Heart right ventricle (tissue), 16 donors: ENCODE measurements at regions of chr7 and their contacts with region 1.

Region 1: GRCh38 chr7:112206238-112207044 is at the starts of genes DOCK4 and ZNF277:
- DNase-seq: peak; percentile 99
- ATAC-seq: peak; percentile 96 to 99 (median 96)
- H3K4me3 ChIP-seq: peak within 1 kb of the TSS; percentile 71 to 98 (median 92)
- H3K27ac ChIP-seq: peak within 1 kb of the TSS; percentile 78 to 95 (median 92)
- H3K4me1 ChIP-seq: peaks cover 2 to 46% (median 34%) of the 10 kb centered on the region in 9 donors
- H3K27me3 ChIP-seq: peaks cover 0 to 12% (median 0%) of the 10 kb centered on the region in 7 donors
- CTCF ChIP-seq: peak in 1 of 9 donors; percentile 10
- total RNA-seq, gene DOCK4: 10.8 to 26.8 (median 16.4) TPM
- total RNA-seq, gene ZNF277: 14.1 to 25.7 (median 17.6) TPM

Region 2: DNA sequence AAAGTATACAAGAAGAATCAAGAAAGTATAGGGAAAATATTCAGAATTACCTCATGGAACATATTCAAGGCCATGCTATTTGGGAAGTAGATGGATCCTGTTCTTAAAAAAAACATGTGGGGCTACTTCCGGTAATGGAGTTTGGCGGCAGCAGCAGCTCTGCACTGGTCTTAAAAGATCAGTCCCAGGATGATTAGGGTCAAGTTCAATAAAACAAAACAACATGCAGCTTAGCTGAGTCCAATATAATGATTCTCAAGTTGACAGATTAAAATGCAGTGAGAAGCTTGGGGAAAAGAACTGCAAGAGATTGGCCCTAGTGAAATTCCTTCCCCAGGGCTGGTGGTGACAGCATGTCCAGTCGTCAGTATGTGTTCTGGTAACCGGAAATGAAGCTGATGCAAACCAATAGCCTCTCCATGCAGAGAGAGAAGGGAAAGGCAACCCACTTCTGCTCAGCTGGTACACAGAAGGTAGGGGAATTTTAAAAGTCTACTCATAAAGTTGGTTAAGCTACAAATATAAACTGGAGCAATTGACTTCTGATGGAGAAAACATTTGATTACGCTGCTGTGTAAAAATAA is 339.0 kb before region 1 on chr7:
- intact Hi-C with region 1: loop called in 1 of 10 experiments (anchors 10 kb)
- DNase-seq: no peak
- ATAC-seq: peak in 4 of 8 donors; percentile 25 to 46 (median 38)
- H3K4me3 ChIP-seq: no peak overlapping the region
- H3K27ac ChIP-seq: peak overlapping the region in 4 of 10 donors; percentile 5 to 62 (median 28)
- H3K4me1 ChIP-seq: peaks cover 0 to 24% (median 5%) of the 10 kb centered on the region in 9 donors
- H3K27me3 ChIP-seq: no peaks in the 10 kb centered on the region
- CTCF ChIP-seq: no peak

Region 3: DNA sequence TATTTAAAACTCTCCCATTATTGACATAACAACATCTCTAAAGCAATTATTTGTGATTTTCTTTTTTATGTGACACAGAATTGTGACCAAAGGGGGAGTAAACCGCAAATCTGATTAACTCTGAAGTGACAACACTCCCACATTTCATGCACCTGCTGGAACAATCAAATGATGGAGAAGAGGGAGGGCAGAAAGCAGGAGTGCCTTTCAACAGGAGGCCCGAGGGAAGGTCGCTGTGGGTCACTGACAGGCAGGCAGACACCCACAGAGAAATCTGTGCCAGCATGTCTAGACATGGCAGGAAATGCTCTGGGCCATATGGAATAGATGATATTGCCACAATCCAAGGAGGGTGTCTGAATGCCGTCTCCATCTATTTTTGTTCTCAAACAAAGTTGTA is 247.5 kb before region 1 on chr7:
- intact Hi-C with region 1: loop called in 5 of 10 experiments (anchors 5 to 10 kb)
- DNase-seq: no peak
- ATAC-seq: no peak
- H3K4me3 ChIP-seq: no peak overlapping the region
- H3K27ac ChIP-seq: no peak overlapping the region
- H3K4me1 ChIP-seq: peaks cover 2 to 50% (median 39%) of the 10 kb centered on the region in 9 donors
- H3K27me3 ChIP-seq: no peaks in the 10 kb centered on the region
- CTCF ChIP-seq: no peak

Region 4: DNA sequence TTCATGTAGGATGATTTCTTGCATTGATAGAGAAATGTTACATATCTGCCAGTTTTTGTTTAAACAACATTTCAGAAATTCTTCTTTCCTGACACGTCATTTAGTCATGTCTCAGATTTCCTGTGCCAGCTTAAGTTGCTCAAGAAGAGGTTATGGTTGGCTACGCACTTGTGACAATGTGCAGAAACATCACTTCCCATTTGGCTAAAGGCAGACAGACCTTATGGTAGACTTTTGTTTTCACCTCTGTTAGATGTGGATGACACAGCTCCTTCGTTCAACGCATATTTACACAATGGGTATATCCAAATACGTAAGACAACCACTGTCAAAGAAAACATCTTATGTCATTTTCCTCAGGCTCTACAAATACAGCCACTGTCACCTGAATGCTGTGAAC is 126.0 kb before region 1 on chr7:
- intact Hi-C with region 1: loop called in 4 of 10 experiments (anchors 5 to 10 kb)
- DNase-seq: no peak
- ATAC-seq: peak in 7 of 8 donors; percentile 37 to 78 (median 75)
- H3K4me3 ChIP-seq: peak overlapping the region in 2 of 10 donors; percentile 6 to 11
- H3K27ac ChIP-seq: peak overlapping the region in 6 of 10 donors; percentile 23 to 90 (median 57)
- H3K4me1 ChIP-seq: peaks cover 0 to 71% (median 37%) of the 10 kb centered on the region in 9 donors
- H3K27me3 ChIP-seq: no peaks in the 10 kb centered on the region
- CTCF ChIP-seq: no peak

Region 5: GRCh38 chr7:112129655-112130323 is 76.7 kb before region 1 on chr7:
- intact Hi-C with region 1: loop called in 1 of 10 experiments (anchors 10 kb)
- DNase-seq: peak in 1 of 2 donors; percentile 28
- ATAC-seq: peak in 7 of 8 donors; percentile 21 to 90 (median 48)
- H3K4me3 ChIP-seq: no peak overlapping the region
- H3K27ac ChIP-seq: peak overlapping the region in 7 of 10 donors; percentile 11 to 80 (median 59)
- H3K4me1 ChIP-seq: peaks cover 5 to 60% (median 51%) of the 10 kb centered on the region in 9 donors
- H3K27me3 ChIP-seq: no peaks in the 10 kb centered on the region
- CTCF ChIP-seq: no peak

Region 6: DNA sequence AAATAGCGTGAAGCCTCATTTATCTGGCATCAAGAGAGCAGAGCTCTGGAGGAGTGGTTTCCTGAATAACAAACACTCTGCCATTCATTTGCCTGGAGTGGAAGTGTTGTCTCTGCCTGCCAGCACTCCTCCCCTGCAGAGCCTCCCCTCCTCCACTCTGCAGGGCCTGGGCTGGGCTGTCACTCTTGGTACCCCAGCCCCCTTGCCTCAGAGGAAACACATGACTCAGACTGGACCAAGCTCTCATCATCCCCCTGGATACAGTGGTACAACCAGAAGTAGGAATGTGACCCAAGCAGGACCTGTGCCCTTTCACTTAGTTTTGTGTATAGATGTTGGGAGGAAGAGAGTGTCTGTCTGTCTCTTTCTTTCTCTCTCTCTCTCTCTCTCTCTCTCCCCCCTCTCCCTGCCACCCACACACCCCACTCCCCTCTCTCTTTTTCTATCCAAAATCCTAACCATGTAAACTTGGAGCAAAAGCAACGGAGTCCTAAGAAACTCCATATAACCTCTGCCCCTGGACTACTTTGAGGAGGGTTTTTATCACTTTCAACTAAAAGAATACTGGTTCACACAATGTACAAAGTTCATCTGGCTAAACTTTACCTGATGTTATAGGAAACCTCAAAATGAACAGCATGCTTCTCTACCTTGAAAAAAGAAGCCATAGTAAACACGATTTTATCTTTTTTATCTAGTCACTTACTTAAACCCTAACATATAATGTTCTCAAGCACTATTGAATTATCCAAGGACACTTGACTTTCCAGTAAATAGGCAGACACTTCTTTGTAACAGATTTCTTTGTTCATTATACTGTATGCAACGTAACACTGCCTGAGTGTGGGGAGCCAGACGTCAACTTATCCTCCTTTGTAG is 44.1 kb before region 1 on chr7:
- intact Hi-C with region 1: loop called in 2 of 10 experiments (anchors 5 kb)
- DNase-seq: peak; percentile 37 to 58
- ATAC-seq: peak; percentile 78 to 97 (median 92)
- H3K4me3 ChIP-seq: no peak overlapping the region
- H3K27ac ChIP-seq: peak overlapping the region in 5 of 10 donors; percentile 18 to 62 (median 56)
- H3K4me1 ChIP-seq: peaks cover 5 to 66% (median 36%) of the 10 kb centered on the region in 9 donors
- H3K27me3 ChIP-seq: no peaks in the 10 kb centered on the region
- CTCF ChIP-seq: no peak

Region 7: GRCh38 chr7:112266595-112267270 is 60.3 kb after region 1 on chr7:
- intact Hi-C with region 1: no loop called
- DNase-seq: no peak
- ATAC-seq: no peak
- H3K4me3 ChIP-seq: no peak overlapping the region
- H3K27ac ChIP-seq: no peak overlapping the region
- H3K4me1 ChIP-seq: peaks cover 0 to 33% (median 18%) of the 10 kb centered on the region in 9 donors
- H3K27me3 ChIP-seq: no peaks in the 10 kb centered on the region
- CTCF ChIP-seq: no peak

Region 8: DNA sequence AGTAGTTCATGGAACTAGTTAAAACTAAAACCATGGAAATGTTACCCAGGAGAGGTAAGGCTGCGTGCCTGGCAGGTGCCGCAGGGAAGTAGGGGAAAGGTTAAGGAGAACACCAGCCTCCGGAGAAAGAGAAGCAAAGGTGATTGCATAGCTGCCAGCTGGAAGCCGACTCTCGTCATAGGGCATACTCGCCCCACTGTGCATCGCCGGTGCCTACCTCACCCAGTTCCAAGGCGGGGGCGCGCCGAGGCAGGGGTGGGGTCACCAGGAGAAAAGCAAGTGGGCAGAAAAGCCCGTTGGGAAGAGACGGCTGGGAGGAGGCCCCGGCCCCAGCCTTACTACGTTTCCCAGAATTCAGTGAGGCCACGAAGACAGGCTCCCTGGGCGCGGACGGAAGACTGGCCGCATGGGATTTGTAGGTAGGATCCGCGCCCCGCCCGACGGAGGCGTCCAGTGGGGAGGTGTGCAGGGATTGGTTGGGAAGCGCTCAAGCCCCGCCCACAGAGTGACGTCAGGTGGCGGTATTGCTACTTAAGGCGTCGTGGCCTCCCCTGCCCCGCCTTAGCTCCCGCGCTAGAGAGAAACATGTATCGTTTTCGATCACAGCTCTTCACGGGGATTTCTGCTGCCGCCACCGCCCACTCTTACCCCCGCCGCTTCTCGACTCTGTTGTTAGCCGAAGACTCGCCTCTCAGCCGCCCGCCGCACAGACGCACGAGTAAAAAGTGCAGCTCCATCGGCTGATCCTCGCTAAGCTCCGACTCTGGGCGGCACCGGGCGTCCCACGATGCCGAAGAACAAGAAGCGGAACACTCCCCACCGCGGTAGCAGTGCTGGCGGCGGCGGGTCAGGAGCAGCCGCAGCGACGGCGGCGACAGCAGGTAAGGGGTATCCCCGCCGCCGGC is 243.7 kb after region 1 on chr7 and contains the start of gene IFRD1:
- intact Hi-C with region 1: loop called in 1 of 10 experiments (anchors 5 kb)
- DNase-seq: peak; percentile 99
- ATAC-seq: peak; percentile 90 to 96 (median 94)
- H3K4me3 ChIP-seq: peak within 1 kb of the TSS; percentile 77 to 97 (median 90)
- H3K27ac ChIP-seq: peak within 1 kb of the TSS; percentile 91 to 99 (median 96)
- H3K4me1 ChIP-seq: peaks cover 0 to 49% (median 39%) of the 10 kb centered on the region in 9 donors
- H3K27me3 ChIP-seq: no peaks in the 10 kb centered on the region
- CTCF ChIP-seq: no peak
- total RNA-seq, gene IFRD1: 17.5 to 94.6 (median 26.2) TPM